HEK293T (cell line): ENCODE measurements at regions of chr2 and their contacts with region 1.

Region 1: GRCh38 chr2:119366649-119367471 is at the starts of genes C2orf76 and DBI:
- DNase-seq: peak; percentile 98

Region 2: DNA sequence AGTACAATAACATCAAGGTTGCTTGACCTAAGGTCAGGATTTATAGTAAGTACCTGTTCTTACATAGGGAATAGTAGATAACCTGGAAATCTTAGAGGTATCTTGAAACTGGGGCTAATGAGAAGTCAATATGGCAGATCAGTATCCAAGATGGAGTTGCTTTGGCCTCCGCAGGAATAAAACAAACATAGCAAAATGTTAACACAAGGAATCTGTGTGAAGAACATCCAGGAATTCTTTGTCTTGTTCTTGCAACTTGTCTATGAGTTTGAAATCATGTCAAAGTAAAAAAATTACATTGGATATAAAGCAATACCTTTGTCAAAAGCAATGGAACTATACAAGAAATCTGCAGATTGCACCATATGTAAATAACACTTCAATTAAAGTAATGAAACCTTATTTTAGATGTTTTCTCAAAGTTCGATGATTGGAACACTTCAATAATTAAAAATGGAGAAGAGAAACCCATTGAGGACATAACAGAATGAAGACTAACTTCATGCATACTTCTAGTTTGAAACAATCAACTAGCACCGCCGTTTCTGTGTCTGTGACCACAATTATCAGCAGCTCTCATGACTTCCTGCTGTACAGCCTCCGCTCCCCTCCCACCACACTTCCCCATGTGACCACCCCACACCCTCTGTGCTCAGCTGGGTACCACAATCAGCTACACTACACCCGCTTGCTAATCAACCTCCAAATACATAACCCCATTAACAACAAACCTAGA is 27.9 kb before region 1 on chr2:
- CTCF ChIA-PET with region 1: no interaction called
- POLR2A ChIA-PET with region 1: interaction called, 10 read pairs
- DNase-seq: no peak

Region 3: GRCh38 chr2:119352357-119352756 is 14.5 kb before region 1 on chr2:
- CTCF ChIA-PET with region 1: interaction called, 5 read pairs
- POLR2A ChIA-PET with region 1: interaction called, 16 read pairs
- DNase-seq: no peak

Region 4: DNA sequence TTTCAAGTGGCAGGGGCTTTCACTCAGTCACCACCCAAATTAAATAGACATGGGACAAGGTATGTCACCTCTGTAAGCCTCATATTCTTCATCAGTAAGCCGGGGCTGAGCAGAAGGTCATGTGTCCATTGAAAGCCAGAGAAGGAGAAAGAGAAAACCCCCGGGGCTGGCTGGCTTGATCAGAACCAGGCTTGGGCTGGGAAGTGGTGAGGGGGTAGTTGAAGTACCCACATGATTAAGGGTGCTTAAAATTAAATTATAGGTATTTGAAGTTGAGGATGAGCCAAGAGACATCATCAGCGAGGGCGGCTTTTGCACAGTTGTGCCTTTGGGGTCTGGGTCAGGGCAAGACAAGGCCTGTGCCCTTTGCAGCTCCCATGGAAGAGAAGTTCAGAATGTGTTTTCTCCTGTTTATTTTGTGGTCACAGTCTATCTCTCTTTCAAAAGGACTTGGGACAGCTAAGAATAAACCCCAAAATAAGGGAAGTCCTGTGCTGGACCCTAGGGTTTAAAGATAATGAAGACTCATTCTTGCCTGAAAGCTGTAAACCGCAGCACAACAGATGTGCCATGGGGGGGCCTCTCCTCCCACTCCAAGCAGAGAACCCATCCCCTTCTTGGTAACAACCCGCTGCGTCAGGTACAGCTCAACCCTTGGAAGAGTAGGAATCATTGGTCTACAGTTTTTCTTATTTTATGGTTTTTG is 10.6 kb after region 1 on chr2:
- CTCF ChIA-PET with region 1: no interaction called
- POLR2A ChIA-PET with region 1: interaction called, 13 read pairs
- DNase-seq: no peak